Left ventricle myocardium superior (tissue), 1 donor: ENCODE measurements at regions of chr3 and their contacts with region 1.

Region 1: GRCh38 chr3:180619723-180620122 is 17.8 kb downstream of the TTC14 start:
- DNase-seq: no peak
- ATAC-seq: no peak

Region 2: GRCh38 chr3:180646187-180646790 is 26.6 kb after region 1 on chr3:
- intact Hi-C with region 1: loop called (anchors 2 kb)
- DNase-seq: no peak
- ATAC-seq: no peak